Mammary epithelial cell (primary cell): ENCODE measurements at regions of chr21 and their contacts with region 1.

Region 1: DNA sequence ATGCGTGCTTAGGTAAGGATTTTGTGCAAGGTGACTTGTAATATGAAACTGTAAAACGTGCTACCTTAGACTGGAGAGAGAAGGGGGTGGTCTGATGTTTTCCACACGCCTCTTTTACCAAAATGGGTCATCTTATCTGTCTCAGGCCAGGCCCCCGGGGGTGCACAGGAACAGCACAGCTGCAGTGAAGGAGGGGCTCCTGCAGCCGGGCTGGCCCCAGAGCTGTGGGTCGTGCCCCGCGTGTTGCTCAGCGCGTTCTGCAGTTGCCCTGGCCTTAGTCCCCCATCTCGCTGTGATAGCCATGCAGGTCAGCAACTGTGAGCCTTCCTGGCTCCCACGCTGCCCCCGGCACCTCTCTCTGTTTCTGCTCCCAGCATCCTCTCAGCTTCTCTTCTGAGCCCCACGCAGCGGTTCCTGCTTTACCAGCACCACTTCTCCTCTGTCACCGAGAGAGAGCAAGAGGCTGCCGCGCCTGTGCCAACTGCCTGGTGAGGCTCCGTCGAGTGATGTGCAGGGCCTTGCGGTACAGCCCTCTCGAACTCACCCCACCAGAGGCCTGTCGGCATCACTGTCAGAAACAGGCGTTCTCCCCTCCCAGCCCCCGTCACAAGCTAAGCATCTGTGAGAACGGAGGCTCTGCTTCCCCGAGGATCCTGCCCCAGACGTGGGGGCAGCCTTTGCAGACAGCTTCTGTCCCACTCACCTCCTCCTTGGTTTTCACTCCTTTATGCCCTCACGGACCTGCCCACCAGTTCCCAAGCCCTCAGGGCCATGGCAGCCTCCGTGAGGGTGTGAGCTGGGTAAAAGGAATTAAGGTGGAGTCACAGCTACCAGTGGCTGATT is 73.3 kb downstream of the ADARB1 start:
- DNase-seq: peak; percentile 41
- H3K4me3 ChIP-seq: no peak overlapping the region
- H3K27ac ChIP-seq: no peak overlapping the region
- H3K4me1 ChIP-seq: peaks cover 28% of the 10 kb centered on the region
- H3K27me3 ChIP-seq: no peaks in the 10 kb centered on the region
- CTCF ChIP-seq: no peak

Region 2: DNA sequence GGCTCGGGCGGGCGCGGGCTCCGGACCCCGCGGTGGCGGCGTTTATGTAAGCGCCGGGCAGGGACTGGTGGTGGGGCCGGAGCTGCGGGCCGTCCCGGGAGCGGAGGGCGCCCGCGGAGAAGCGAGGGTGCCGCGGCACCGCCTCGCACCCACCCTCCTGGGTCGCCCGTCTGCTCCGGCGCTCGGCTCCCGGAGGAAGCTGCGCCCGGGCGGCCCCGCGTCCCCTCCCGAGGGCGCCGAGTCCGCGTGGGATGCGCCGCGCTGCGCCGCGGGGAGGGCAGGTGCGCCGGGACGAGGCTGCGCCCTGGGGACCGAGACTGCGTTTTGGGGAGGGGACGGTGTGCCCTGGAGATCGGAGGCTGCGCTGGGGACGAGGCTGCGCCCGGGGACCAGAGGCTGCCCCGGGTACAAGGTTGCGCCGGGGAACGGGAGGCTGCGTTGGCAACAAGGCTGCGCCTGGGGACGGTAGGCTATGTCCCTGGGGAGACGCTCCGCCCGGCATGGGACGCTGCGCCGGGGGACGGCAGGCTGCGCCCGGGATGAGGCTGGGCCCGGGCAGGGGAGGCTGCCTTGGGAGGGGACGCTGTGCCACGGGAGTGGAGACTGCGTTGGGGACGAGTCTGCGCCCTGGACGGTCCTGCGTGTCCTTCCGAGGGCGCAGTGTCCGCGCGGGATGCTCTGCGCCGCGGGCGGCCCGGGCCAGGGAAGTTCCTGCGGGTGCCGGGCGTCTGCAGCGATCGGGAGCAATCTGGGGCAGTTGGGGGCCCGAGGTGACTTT is 72.7 kb before region 1 on chr21:
- CTCF ChIA-PET with region 1: no interaction called
- dilution Hi-C with region 1: no loop called
- in situ Hi-C with region 1: no loop called
- intact Hi-C with region 1: no loop called
- DNase-seq: peak; percentile 60
- H3K4me3 ChIP-seq: peak overlapping the region; percentile 58 to 96 (median 87)
- H3K27ac ChIP-seq: peak overlapping the region; percentile 30
- H3K4me1 ChIP-seq: peaks cover 39% of the 10 kb centered on the region
- H3K27me3 ChIP-seq: no peaks in the 10 kb centered on the region
- CTCF ChIP-seq: no peak

Region 3: GRCh38 chr21:45244799-45245340 is 97.2 kb after region 1 on chr21:
- CTCF ChIA-PET with region 1: no interaction called
- dilution Hi-C with region 1: loop called (anchors 5 kb)
- in situ Hi-C with region 1: no loop called
- intact Hi-C with region 1: no loop called
- DNase-seq: no peak
- H3K4me3 ChIP-seq: no peak overlapping the region
- H3K27ac ChIP-seq: no peak overlapping the region
- H3K4me1 ChIP-seq: peaks cover 6% of the 10 kb centered on the region
- H3K27me3 ChIP-seq: peaks cover 3% of the 10 kb centered on the region
- CTCF ChIP-seq: no peak